GM18951 (cell line): ENCODE measurements at regions of chr22 and their contacts with region 1.

Region 1: DNA sequence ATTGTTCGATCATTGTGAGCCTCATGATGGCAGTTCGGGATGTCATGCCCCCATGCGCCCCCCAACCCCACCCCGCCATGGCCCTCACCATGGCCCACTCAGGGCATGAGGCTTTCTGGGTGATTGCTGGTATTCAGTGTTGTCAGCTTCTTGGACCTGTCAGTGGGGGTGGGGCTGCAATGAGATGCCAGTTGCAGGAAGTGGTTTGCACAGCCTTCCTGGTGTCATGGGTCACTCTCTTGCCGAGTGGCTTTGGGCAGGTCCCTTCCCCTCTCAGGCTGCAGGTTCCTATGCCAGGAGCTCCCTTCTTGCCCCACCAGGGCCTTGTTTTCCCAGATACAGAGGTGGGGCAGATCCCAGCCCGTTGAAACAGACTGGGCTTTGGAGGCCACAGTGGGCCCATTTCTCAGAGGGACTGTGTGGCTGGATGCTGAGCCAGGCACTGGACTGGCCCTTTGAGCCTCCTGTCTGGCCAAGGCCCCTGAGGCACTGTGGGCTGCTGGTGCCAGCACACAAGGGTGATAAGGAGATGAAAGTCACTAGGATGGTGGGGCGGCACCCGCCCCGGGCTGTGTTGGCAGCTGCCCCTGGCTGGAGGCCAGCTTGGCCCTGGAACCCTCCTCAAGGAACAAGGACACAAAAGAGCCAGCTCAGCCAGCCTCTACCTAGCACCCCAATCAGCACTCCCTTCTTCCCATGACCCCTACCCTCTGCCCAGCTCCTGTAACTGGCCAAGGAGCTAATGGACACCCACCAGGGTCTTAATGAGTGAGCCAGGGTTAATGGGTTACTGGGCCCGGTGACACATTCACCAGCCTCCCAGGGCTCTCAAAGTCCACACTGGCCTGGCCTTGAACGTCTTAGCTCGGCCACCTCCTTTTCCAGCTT is 1.5 kb upstream of the GGT1 start:
- POLR2A ChIP-seq: no peak

Region 2: DNA sequence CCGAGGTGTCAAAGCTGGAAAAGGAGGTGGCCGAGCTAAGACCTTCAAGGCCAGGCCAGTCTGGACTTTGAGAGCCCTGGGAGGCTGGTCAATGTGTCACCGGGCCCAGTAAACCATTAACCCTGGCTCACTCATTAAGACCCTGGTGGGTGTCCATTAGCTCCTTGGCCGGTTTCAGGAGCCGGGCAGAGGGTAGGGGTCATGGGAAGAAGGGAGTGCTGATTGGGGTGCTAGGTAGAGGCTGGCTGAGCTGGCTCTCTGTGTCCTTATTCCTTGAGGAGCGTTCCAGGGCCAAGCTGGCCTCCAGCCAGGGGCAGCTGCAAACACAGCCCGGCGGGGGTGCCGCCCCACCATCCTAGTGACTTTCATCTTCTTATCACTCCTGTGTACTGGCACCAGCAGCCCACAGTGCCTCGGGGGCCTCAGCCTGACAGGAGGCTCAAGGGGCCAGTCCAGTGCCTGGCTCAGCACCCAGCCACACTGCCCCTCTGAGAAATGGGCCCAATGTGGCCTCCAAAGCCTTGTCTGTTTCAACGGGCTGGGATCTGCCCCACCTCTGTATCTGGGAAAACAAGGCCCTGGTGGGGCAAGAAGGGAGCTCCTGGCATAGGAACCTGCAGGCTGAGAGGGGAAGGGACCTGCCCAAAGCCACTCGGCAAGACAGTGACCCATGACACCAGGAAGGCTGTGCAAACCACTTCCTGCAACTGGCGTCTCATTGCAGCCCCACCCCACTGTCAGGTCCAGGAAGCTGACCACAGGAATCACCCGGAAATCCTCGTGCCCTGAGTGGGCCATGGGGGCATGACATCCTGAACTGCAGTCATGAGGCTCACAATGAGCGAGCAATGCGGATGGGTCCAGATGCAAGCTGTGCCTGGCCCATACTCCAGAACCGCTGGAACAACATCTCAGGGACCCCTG is 925.7 kb before region 1 on chr22:
- in situ Hi-C with region 1: loop called (anchors 10 kb)
- POLR2A ChIP-seq: no peak

Region 3: DNA sequence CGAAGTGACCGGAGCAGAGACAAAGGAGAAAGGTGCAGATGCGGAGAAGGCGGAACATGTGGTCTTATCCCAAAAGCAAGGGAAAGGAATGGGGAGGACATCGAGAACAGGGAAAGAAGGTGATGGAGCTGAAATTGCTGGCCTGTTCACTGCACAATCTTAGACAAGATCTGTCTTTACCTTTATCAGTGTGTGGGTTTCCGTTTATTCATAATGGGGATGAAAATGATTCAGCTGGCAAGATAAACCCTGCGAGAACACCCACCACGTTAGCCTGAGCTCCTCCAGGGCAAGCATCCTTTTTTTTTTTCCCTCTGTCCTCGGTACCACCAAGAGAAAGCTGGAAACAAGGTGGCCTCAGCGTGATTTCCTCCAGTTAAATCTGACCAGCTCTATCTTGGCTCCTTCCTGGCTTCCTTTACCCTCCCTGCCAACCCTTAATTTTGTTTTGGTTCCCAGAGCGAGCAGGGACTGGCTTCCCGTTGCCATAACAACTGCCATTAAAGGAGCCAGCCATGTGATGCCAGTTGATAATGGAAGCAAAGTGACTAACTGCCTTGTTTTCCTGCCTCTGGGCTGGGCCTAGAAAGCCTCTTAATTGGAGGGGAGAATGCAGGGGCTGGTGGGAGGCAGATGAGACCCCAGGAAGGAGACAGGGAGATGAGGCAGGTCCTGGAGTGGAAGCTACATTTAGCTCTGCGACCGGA is 208.7 kb after region 1 on chr22:
- in situ Hi-C with region 1: no loop called
- POLR2A ChIP-seq: no peak